ENCODE measurements at regions of chrX and their contacts with region 1.

Region 1: GRCh38 chrX:140141444-140142029 is 176.2 kb upstream of the CXorf66 start:
- DNase-seq: peak; percentile 73
- H3K4me3 Mint-ChIP-seq: no peak overlapping the region
- H3K27ac Mint-ChIP-seq: no peak overlapping the region
- H3K4me1 Mint-ChIP-seq: no peaks in the 10 kb centered on the region
- H3K27me3 Mint-ChIP-seq: no peaks in the 10 kb centered on the region
- CTCF ChIP-seq: peak; percentile 44

Region 2: GRCh38 chrX:139971394-139971749 is 170.2 kb before region 1 on chrX:
- CTCF ChIA-PET with region 1: no interaction called
- POLR2A ChIA-PET with region 1: no interaction called
- intact Hi-C with region 1: no loop called
- DNase-seq: no peak
- H3K4me3 Mint-ChIP-seq: no peak overlapping the region
- H3K27ac Mint-ChIP-seq: no peak overlapping the region
- H3K4me1 Mint-ChIP-seq: no peaks in the 10 kb centered on the region
- H3K27me3 Mint-ChIP-seq: no peaks in the 10 kb centered on the region
- CTCF ChIP-seq: no peak

Region 3: DNA sequence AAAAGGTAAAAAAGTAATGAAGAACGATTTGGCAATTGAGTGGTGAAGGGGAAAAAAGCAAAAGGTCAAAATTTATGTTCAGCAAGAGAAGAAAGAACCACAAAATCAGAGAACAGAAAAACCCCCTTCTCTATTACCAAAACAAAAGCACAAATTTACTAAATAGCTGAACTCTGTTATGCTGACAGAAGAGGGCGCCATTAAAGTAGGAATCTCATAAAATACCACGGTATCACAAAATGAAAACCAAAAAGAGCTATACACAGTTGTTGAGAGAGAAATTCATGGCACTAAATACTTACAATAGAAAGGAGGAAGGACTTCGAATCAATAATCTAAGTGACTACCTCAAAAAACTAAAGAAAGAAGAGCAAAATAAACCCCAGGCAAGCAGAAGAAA is 106.6 kb before region 1 on chrX:
- CTCF ChIA-PET with region 1: interaction called, 10 read pairs
- POLR2A ChIA-PET with region 1: no interaction called
- intact Hi-C with region 1: no loop called
- DNase-seq: peak; percentile 33
- H3K4me3 Mint-ChIP-seq: no peak overlapping the region
- H3K27ac Mint-ChIP-seq: no peak overlapping the region
- H3K4me1 Mint-ChIP-seq: peaks cover 5% of the 10 kb centered on the region
- H3K27me3 Mint-ChIP-seq: peaks cover 21% of the 10 kb centered on the region
- CTCF ChIP-seq: peak; percentile 37

Region 4: DNA sequence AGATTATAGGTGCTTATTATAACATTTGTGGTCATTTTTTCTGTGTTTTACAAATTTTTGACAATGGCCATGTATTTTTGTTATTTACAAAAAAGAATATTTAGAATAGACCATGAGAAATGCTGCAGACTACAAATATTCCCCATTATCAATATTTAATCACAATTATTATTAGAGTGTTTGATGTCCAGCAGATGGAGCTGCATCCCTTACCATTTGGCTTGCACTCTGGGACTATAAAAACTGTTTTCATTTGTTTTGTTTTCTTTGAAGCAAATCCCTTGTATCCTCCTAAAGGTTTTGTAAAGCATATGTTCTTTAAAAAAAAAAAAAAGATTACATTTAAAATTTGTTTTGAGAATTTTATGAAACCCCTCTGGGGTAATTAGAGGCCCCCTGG is 90.6 kb before region 1 on chrX:
- CTCF ChIA-PET with region 1: interaction called, 22 read pairs
- POLR2A ChIA-PET with region 1: no interaction called
- intact Hi-C with region 1: loop called (anchors 2 kb)
- DNase-seq: peak; percentile 35
- H3K4me3 Mint-ChIP-seq: no peak overlapping the region
- H3K27ac Mint-ChIP-seq: no peak overlapping the region
- H3K4me1 Mint-ChIP-seq: no peaks in the 10 kb centered on the region
- H3K27me3 Mint-ChIP-seq: peaks cover 39% of the 10 kb centered on the region
- CTCF ChIP-seq: peak; percentile 34

Region 5: GRCh38 chrX:140057001-140057411 is 84.5 kb before region 1 on chrX:
- CTCF ChIA-PET with region 1: interaction called, 28 read pairs
- POLR2A ChIA-PET with region 1: no interaction called
- intact Hi-C with region 1: loop called (anchors 2 kb)
- DNase-seq: peak; percentile 86
- H3K4me3 Mint-ChIP-seq: no peak overlapping the region
- H3K27ac Mint-ChIP-seq: no peak overlapping the region
- H3K4me1 Mint-ChIP-seq: peaks cover 6% of the 10 kb centered on the region
- H3K27me3 Mint-ChIP-seq: peaks cover 15% of the 10 kb centered on the region
- CTCF ChIP-seq: peak; percentile 83

Region 6: DNA sequence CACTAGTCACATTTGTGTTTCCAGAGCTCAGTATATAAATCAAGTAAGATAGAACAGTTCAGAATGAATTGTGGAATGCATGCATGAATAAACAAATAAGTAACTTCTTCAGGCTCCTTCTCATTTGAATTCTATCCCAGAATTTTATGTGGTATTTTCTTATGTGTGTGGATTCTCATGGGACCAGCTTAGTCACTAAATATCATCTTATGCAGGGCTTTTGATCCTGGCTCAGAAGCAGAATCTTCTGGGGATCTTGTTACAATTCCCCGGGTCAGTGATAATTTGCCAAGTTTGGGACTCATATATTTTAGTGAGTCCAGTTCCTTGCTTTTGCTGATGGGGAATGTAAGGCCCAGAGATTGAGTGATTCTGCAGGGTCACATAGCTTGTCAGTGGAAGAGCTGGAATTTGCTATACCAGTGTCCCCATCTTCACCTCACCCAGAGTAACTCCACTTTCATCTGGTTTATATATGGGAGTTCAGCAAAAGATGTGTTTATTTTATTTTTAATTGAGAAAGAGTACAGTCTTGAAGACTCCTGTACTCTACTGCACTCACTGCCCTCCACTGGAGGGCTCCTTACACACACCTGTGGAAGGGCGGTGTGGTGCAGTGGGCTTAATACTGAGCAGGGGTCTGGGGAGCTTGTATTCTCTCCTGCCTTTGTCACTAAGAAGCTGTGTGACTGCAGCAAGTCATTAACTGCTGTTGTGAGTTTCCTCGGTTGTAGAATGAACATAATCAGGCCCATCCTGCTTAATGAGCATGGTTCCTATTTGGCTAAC is 22.0 kb after region 1 on chrX:
- CTCF ChIA-PET with region 1: interaction called, 14 read pairs
- POLR2A ChIA-PET with region 1: no interaction called
- intact Hi-C with region 1: no loop called
- DNase-seq: no peak
- H3K4me3 Mint-ChIP-seq: no peak overlapping the region
- H3K27ac Mint-ChIP-seq: no peak overlapping the region
- H3K4me1 Mint-ChIP-seq: no peaks in the 10 kb centered on the region
- H3K27me3 Mint-ChIP-seq: no peaks in the 10 kb centered on the region
- CTCF ChIP-seq: no peak